ENCODE measurements at regions of chr1 and their contacts with region 1.

Region 1: DNA sequence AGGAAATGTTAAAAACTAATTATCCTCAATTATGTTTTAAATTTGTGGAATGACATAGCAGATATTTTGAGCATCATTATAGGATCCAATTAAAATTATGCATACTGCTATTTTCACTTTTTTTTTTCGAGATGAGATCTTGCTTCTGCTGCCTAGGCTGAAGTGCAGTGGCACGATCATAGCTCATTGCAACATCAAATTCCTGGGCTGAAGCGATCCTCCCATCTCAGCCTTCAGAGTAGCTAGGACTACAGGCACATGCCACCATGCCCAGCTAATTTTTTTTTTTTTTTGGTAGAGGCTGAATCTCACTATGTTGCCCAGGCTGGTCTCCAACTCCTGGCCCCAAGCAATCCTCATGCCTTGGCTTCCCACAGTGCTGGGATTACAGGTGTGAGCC is 11.3 kb upstream of the SLC1A7 start:
- DNase-seq: no peak
- H3K4me3 ChIP-seq: no peak overlapping the region
- CTCF ChIP-seq: no peak

Region 2: GRCh38 chr1:53165408-53165961 is 11.7 kb after region 1 on chr1:
- CTCF ChIA-PET with region 1: interaction called, 12 read pairs
- POLR2A ChIA-PET with region 1: no interaction called
- DNase-seq: no peak
- H3K4me3 ChIP-seq: no peak overlapping the region
- CTCF ChIP-seq: no peak

Region 3: DNA sequence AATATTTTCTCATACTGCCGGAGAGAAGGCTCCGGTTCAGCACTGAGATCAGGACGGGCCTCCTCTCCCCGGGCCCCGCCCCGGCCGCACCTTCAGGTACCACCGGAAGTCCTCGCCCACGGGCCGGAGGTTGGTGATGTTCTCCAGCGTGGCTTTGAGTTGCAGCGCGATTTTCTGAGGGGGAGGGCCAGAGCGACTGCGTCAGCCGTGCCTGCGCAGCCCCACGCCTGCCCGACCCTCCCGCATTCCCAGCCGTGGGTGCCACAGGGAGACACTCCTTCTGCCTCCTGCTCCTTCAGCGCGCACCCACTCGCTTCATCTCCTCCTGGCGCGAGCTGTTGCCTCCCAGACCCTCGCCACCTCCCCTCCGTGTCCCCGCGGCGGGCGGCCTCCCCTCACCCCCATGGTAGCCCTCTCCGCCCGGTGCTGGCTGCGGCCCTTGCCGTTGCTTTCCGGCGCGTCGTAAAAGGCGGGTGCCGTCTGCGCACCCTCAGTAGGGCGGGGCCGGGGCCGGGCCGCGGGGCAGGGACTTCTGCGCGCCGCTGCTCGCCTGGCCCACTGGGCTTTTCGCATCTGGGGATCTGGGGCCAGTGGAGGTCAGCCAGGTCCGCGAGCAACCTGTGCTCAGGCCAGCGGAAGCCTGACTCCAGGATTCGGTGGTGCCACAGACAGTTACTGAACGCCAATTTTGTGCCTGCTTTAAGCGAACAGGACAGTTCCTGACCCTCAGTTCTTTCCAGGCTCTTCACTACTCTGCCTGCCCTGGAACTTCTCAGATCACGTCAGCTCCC is 66.6 kb after region 1 on chr1 and contains the start of gene CZIB:
- CTCF ChIA-PET with region 1: no interaction called
- POLR2A ChIA-PET with region 1: no interaction called
- DNase-seq: peak; percentile 34
- H3K4me3 ChIP-seq: peak within 1 kb of the TSS; percentile 100
- CTCF ChIP-seq: no peak

Measured in AG04449 (cell line).